ENCODE measurements at regions of chr7 and their contacts with region 1.

Region 1: DNA sequence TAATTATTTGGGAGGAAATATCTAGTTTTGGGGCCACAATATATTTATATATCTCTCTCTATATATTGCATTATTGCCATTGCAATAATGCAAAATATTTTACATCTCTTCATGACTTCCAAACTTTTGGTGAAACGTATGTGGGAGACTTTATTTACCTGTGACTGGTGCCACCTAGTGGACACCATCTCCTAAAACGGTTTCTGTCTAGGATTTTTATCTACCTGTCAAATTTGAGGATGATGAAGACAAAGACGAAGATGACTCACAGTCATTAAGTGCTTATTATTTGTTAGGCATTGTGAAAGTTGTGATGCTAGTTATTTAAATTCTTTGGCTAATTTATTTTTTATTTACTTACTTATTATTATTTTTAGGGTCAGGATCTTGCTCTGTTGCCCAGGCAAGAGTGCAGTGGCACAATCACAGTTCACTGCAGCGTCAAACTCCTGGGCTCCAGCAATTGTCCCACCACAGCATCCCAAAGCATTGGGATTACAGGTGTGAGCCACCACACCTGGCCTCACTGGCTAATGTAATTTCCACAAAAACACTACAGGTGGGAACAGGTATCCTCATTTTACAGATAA is 18.7 kb upstream of the CBLL1 start:
- DNase-seq: peak; percentile 51
- H3K4me3 ChIP-seq: no peak overlapping the region
- H3K27ac ChIP-seq: no peak overlapping the region
- H3K4me1 ChIP-seq: no peaks in the 10 kb centered on the region
- H3K27me3 ChIP-seq: no peaks in the 10 kb centered on the region
- CTCF ChIP-seq: peak; percentile 54

Region 2: GRCh38 chr7:107213193-107213788 is 512.0 kb before region 1 on chr7:
- intact Hi-C with region 1: loop called (anchors 10 kb)
- DNase-seq: no peak
- H3K4me3 ChIP-seq: no peak overlapping the region
- H3K27ac ChIP-seq: no peak overlapping the region
- H3K4me1 ChIP-seq: no peaks in the 10 kb centered on the region
- H3K27me3 ChIP-seq: no peaks in the 10 kb centered on the region
- CTCF ChIP-seq: no peak

Region 3: DNA sequence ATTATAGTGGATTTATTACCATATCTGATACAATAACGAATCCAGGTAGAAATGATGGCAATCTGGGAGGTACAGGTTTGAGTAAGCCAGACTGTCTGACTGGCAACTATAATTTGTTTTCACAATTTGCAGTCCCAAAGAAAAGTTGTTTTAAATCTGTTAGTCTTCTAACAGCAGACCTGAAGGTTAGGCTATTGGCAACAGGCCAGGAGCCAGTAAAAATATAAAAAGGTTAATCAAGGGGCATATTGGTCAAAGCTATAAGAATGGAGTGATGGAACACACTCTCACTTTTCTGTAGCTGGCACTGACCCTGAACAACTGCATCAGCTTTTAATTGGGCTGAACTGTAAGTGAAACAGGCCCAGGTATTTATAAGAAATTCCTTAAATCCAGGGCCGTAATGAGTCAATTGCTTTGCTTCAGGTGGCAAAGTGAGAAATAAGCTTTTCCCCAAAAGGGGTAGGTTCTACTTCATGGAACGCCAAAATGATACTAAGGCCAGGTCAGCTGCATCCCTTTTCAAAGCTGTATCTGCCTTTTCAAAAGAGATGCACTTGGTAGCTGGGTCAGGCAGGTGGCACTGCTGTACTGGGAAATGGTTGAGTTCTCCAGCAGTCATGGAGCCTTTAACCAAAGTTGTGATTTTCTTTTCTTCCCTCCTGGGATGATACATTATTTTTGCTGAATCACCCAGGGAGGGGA is 262.4 kb before region 1 on chr7:
- intact Hi-C with region 1: loop called (anchors 2 kb)
- DNase-seq: peak; percentile 34
- H3K4me3 ChIP-seq: no peak overlapping the region
- H3K27ac ChIP-seq: no peak overlapping the region
- H3K4me1 ChIP-seq: no peaks in the 10 kb centered on the region
- H3K27me3 ChIP-seq: no peaks in the 10 kb centered on the region
- CTCF ChIP-seq: peak; percentile 60

Region 4: DNA sequence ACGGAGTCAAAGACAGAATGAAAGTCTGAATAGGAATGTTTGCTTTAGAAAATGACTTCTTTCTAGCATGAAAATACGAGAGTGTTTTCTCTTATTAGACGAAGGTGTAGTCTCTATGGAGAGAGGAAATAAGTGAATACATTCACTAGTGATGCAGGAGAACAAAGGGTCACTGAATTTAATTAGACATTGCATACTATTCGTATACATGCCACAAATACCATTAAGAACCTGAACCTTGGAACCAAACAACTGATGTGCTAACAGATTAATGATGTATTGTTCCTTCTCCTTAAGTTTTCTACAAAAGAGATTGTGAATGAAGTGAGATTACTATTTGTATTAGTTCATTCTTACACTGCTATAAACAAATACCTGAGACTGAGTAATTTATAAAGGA is 834.0 kb after region 1 on chr7:
- intact Hi-C with region 1: no loop called
- DNase-seq: no peak
- H3K4me3 ChIP-seq: no peak overlapping the region
- H3K27ac ChIP-seq: no peak overlapping the region
- H3K4me1 ChIP-seq: no peaks in the 10 kb centered on the region
- H3K27me3 ChIP-seq: no peaks in the 10 kb centered on the region
- CTCF ChIP-seq: no peak

Region 5: GRCh38 chr7:108605559-108606201 is 880.4 kb after region 1 on chr7:
- intact Hi-C with region 1: no loop called
- DNase-seq: no peak
- H3K4me3 ChIP-seq: no peak overlapping the region
- H3K27ac ChIP-seq: no peak overlapping the region
- H3K4me1 ChIP-seq: no peaks in the 10 kb centered on the region
- H3K27me3 ChIP-seq: no peaks in the 10 kb centered on the region
- CTCF ChIP-seq: no peak

Measured in colonic mucosa (tissue), 4 donors.